ENCODE measurements at regions of chr10 and their contacts with region 1.

Region 1: DNA sequence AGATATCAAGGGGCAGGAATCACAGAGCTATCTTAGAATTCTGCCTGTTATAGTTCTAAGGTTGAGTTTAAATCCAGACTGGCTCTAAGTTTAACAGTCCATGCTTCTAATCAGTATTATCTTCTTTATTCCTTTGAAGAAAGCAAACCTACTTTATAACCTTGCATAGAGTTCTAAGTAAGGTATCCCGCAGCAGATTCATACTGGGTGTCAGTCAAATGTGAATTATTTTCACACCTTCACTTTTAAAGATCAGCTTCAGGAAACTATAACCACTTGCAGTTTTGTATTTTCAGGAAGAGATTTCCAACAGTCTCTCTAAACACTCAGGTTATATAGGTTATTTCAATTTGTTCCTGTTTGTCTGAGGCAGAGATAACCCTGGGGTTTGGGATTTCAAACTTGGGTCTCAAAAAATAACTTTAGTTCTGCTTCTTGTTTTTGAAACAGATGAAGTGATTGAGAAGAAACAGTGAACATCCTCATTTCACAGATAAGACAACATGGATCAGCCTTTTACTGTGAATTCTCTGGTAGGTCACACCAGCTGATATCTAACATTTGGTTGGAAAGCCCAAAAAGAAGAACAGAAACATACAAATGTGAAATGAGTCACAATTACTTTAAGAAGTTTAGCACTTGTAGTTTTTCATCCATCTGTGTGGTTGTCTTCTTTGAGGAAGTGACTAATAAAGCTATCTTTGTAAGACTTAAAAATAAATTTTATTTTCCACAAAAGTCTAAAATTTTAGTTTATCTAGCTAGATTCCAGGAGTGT is 21.4 kb downstream of the STAMBPL1 start:
- DNase-seq: no peak
- ATAC-seq: no peak
- H3K4me3 ChIP-seq: no peak overlapping the region
- H3K27ac ChIP-seq: no peak overlapping the region
- H3K4me1 ChIP-seq: peaks cover 43% of the 10 kb centered on the region
- CTCF ChIP-seq: no peak
- EP300 ChIP-seq: no peak
- POLR2A ChIP-seq: no peak
- RAD21 ChIP-seq: no peak

Region 2: GRCh38 chr10:88926566-88927415 is 25.4 kb after region 1 on chr10:
- CTCF ChIA-PET with region 1: interaction called, 63 read pairs
- POLR2A ChIA-PET with region 1: no interaction called
- DNase-seq: no peak
- ATAC-seq: no peak
- H3K4me3 ChIP-seq: no peak overlapping the region
- H3K27ac ChIP-seq: no peak overlapping the region
- H3K4me1 ChIP-seq: no peaks in the 10 kb centered on the region
- CTCF ChIP-seq: no peak
- EP300 ChIP-seq: no peak
- POLR2A ChIP-seq: no peak
- RAD21 ChIP-seq: no peak

Region 3: GRCh38 chr10:89351780-89352597 is 450.6 kb after region 1 on chr10:
- CTCF ChIA-PET with region 1: no interaction called
- POLR2A ChIA-PET with region 1: no interaction called
- DNase-seq: peak; percentile 62 to 80
- ATAC-seq: peak; percentile 83 to 88
- H3K4me3 ChIP-seq: peak overlapping the region; percentile 9; the same call in 1 of the 3 replicates
- H3K27ac ChIP-seq: peak overlapping the region; percentile 75 to 83
- H3K4me1 ChIP-seq: peaks cover 42% of the 10 kb centered on the region
- CTCF ChIP-seq: no peak
- EP300 ChIP-seq: no peak
- POLR2A ChIP-seq: no peak
- RAD21 ChIP-seq: no peak